Cardiac septum (tissue), 1 donor: ENCODE measurements at regions of chr3 and their contacts with region 1.

Region 1: GRCh38 chr3:65732051-65732935 is 306.4 kb downstream of the MAGI1 start:
- DNase-seq: no peak

Region 2: GRCh38 chr3:65342084-65342683 is 390.1 kb before region 1 on chr3:
- intact Hi-C with region 1: loop called (anchors 10 kb)
- DNase-seq: no peak

Region 3: DNA sequence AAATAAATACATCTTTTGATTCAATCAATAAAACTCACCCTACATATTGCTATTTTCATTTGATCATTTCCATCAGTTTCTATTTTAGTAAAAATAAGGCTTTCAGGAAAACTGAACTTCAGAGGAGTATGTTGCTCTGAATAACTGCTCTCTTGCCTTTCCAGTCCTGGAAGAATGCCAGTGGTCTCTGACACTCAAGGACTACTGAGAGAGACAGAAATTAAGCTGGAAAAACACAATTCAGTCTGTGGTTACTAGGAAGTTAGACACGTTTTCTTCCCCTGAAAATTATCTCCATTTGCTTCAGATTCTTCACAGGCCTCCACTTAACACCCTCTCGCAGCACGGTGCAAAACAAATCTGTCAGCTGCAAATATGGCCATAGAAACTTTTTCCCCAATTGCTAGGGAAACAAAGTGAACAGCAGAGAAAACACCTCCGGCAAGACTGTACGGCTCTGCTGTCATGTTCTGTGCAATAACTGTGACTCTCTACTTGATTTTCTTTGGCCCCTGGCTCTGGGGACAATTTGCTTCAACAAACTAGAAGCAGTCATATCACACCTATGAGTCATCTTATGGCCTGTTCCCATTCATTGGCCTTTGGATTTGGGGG is 46.6 kb before region 1 on chr3:
- intact Hi-C with region 1: loop called (anchors 5 kb)
- DNase-seq: no peak